Dorsolateral prefrontal cortex (tissue), 120 donors: ENCODE measurements at regions of chr10 and their contacts with region 1.

Region 1: DNA sequence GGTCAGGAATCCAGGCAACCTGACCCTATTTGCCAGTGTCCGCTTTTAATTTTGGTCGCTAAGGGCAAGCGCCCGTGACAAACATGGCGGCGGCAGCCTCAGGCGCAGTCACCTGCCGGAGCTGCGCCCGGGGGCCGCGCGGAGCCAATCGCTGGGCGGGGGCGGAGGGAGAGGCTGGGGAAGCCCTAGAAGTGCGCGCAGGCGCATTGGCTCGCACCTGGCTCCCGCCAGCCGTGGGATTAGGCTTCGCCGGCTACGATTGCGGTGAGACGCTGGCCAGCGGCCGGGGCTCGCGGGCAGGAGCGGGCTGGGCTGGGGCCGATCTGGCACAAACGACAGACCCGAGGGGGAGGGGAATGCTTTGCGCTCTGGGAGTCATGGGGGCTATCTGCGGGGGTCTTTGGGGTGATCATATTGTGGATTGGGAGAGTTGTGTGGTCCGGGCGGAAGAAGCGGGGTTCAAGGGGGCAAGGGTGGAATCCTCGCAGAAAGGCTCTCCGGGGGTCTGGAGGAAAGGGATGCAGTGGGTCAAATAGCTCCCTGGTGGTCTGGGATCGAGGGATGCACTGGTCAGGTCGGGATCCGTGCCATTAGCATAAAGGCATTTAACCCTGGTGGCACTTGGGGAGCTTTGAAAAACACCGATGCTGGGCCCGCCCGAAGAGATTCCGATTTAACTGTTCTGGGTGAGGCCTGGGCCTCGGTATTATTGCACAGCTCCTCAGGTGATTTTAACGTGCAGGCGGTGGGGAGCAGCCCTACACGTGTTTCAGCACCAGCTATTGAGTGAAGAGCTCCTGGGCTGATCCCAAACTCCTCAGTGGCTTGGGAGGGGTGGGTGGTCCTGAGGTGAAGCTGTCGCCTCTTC is 10.1 kb upstream of the C10orf95 start:
- DNase-seq: peak; percentile 84 to 96 (median 90)
- H3K4me3 ChIP-seq: peak overlapping the region; percentile 39 to 83 (median 71)
- H3K27ac ChIP-seq: peak overlapping the region in 53 of 59 donors; percentile 7 to 86 (median 66)
- H3K27me3 ChIP-seq: no peaks in the 10 kb centered on the region
- CTCF ChIP-seq: peak in 17 of 56 donors; percentile 6 to 51 (median 28)

Region 2: GRCh38 chr10:102151774-102152544 is 309.5 kb before region 1 on chr10 and contains the start of gene NOLC1:
- intact Hi-C with region 1: loop called in 1 of 2 experiments (anchors 5 kb)
- DNase-seq: peak; percentile 95 to 100 (median 99)
- H3K4me3 ChIP-seq: peak within 1 kb of the TSS; percentile 57 to 100 (median 87)
- H3K27ac ChIP-seq: peak within 1 kb of the TSS; percentile 30 to 94 (median 82)
- H3K27me3 ChIP-seq: no peaks in the 10 kb centered on the region
- CTCF ChIP-seq: peak in 37 of 56 donors; percentile 4 to 54 (median 28)
- total RNA-seq, gene NOLC1: 41.2 to 90.6 (median 65.3) TPM

Region 3: GRCh38 chr10:102796407-102797176 is 335.2 kb after region 1 on chr10:
- intact Hi-C with region 1: no loop called
- DNase-seq: peak; percentile 18 to 84 (median 74)
- H3K4me3 ChIP-seq: peak overlapping the region in 6 of 59 donors; percentile 0 to 26 (median 11)
- H3K27ac ChIP-seq: peak overlapping the region in 57 of 59 donors; percentile 1 to 89 (median 67)
- H3K27me3 ChIP-seq: no peaks in the 10 kb centered on the region
- CTCF ChIP-seq: peak in 2 of 56 donors; percentile 16 to 27